GM18951 (cell line): ENCODE measurements at regions of chr15 and their contacts with region 1.

Region 1: DNA sequence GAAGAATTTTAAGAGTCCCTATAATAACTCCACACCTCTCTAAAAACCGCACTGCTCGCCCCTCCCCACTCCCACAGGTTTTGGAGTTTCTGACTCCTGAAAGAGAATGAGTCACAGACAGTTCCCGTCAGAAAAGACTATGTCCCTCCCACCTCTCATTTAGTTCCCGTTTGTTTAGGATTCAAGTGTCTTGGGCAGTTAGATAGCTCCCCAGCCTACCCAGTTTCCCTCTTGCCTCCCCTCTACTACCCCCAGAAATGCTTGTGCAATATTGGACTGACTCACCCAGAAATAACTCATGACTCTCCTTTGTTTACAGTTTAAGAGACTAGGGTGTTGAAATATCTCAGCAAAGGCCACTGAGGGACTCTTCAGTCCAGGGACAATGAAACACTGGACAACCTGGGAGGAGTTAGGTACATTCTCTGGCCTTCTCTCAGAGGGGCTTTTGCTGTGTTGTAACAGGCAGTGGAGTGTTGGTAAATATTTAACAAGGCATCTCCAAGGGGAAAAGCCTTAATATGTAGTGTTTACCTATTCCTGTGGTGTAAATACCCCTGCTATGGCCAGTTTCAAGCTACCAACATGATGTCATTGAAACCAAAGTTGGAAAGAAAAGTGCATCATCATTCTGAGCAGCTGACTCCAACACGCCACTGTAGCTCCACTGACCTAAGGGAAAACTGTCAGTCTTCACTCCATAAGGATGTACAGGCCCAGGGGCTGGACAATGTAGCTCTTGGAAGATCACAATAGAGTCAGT is 96.1 kb upstream of the CHD2 start:
- POLR2A ChIP-seq: no peak

Region 2: DNA sequence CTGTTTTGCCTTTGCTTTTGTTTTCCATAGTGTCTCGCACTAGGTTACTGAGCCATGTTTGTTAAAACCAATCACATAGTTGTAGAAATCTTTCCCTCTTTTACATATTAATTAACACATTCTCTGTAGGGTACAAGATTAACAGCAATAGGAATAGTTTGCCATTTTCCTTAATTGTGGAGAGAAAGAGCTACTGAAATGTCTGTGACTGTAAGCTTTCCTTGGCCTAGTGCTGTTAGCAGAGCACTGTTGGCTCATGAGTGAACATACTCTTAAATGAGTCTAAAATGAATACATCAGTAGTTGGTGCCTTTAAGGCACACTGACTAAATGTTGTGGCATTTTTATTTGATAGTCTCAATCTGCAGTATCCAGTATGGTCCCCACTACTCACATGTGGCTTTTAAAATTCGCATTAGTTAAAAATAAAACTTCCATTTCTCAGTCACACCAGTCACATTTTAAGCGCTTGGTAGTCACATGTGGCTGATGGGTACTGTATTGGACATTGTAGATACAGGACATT is 124.3 kb after region 1 on chr15:
- in situ Hi-C with region 1: loop called (anchors 5 kb)
- POLR2A ChIP-seq: no peak

Region 3: DNA sequence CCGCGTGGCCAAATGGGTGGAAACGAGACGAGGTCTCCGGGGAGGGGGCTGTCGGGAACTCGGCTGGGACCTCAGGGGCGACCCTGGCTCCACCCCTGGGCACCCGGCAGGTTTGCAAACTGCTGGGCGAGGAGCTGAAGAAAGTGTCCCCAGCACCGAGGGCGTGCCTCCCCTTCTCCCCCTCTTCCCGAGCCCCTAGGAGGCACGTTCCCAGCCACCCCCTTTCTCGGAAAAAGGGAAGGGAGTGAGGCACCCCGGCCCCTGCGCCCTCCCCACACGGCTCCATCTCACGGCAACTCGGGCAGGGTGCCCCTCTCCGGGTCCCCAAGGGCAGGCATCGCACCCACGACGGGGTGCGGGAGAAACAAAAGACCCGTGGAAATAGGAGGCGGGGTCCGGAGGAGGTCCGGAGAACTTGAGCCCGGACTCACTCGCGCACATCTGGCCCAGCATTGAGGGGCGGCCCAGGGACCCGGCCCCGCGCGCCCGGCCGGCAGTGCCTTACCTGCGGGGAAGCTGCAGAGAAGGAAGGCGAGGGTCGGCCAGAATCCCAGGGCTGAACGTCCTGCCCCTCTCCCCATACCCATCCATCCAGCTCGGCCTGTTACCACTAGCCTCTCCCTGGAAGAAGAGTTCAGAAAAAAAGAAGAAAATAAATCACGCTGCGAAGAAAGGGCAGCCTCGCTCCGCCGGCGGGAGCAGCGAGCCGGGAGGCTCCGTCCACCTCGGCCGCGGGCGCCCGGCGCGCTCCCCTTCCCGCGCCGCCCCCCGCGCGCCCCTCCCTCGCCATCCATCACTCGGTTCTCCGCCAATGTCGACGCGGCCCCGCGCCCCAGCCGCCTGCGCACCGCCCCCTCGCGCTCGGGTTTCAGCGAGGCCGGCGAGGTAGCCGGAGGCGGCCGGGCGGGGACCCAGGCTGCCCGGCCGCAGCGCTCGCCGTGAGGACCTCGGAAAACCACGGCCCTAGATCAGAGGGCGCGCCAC is 268.7 kb after region 1 on chr15:
- in situ Hi-C with region 1: no loop called
- POLR2A ChIP-seq: no peak